Breast epithelium (tissue), 4 donors: ENCODE measurements at regions of chr13 and their contacts with region 1.

Region 1: GRCh38 chr13:31050486-31051400 is 111.0 kb downstream of the HSPH1 start:
- DNase-seq: no peak
- H3K4me3 ChIP-seq: no peak overlapping the region
- H3K27ac ChIP-seq: no peak overlapping the region
- H3K4me1 ChIP-seq: peaks cover 0 to 4% of the 10 kb centered on the region in 2 donors
- H3K27me3 ChIP-seq: no peaks in the 10 kb centered on the region
- CTCF ChIP-seq: peak in 1 of 3 donors; percentile 22
- POLR2A ChIP-seq: no peak

Region 2: GRCh38 chr13:31038834-31039552 is 11.8 kb before region 1 on chr13:
- intact Hi-C with region 1: loop called (anchors 1 kb)
- DNase-seq: no peak
- H3K4me3 ChIP-seq: no peak overlapping the region
- H3K27ac ChIP-seq: no peak overlapping the region
- H3K4me1 ChIP-seq: no peaks in the 10 kb centered on the region
- H3K27me3 ChIP-seq: no peaks in the 10 kb centered on the region
- CTCF ChIP-seq: no peak
- POLR2A ChIP-seq: no peak

Region 3: DNA sequence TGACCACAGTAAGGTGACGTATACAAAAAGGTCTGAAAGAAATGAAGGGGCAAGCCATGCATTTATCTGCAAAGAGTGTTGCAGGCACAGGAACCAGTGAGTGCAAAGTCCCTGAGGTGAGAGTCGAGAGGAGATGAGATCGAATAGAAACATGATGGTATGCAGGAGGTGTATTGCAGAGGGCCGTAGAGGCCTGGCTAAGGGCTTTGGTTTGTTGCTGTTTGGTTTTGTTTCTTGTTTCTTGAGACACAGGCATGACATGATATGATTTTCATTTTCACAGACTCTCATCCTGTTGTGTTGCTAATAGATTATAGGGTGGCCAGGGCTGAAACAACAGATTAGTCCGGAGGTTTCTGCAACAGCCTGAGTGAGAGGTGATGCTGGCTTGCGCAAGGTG is 30.6 kb after region 1 on chr13:
- intact Hi-C with region 1: loop called (anchors 2 kb)
- DNase-seq: no peak
- H3K4me3 ChIP-seq: no peak overlapping the region
- H3K27ac ChIP-seq: no peak overlapping the region
- H3K4me1 ChIP-seq: no peaks in the 10 kb centered on the region
- H3K27me3 ChIP-seq: no peaks in the 10 kb centered on the region
- CTCF ChIP-seq: no peak
- POLR2A ChIP-seq: no peak

Region 4: GRCh38 chr13:31115616-31116015 is 64.9 kb after region 1 on chr13:
- intact Hi-C with region 1: no loop called
- DNase-seq: no peak
- H3K4me3 ChIP-seq: no peak overlapping the region
- H3K27ac ChIP-seq: no peak overlapping the region
- H3K4me1 ChIP-seq: no peaks in the 10 kb centered on the region
- H3K27me3 ChIP-seq: no peaks in the 10 kb centered on the region
- CTCF ChIP-seq: no peak
- POLR2A ChIP-seq: no peak

Region 5: GRCh38 chr13:31896427-31896826 is 845.7 kb after region 1 on chr13:
- intact Hi-C with region 1: no loop called
- DNase-seq: no peak
- H3K4me3 ChIP-seq: no peak overlapping the region
- H3K27ac ChIP-seq: peak overlapping the region in 1 of 2 donors; percentile 15
- H3K4me1 ChIP-seq: no peaks in the 10 kb centered on the region
- H3K27me3 ChIP-seq: no peaks in the 10 kb centered on the region
- CTCF ChIP-seq: no peak
- POLR2A ChIP-seq: no peak

Region 6: DNA sequence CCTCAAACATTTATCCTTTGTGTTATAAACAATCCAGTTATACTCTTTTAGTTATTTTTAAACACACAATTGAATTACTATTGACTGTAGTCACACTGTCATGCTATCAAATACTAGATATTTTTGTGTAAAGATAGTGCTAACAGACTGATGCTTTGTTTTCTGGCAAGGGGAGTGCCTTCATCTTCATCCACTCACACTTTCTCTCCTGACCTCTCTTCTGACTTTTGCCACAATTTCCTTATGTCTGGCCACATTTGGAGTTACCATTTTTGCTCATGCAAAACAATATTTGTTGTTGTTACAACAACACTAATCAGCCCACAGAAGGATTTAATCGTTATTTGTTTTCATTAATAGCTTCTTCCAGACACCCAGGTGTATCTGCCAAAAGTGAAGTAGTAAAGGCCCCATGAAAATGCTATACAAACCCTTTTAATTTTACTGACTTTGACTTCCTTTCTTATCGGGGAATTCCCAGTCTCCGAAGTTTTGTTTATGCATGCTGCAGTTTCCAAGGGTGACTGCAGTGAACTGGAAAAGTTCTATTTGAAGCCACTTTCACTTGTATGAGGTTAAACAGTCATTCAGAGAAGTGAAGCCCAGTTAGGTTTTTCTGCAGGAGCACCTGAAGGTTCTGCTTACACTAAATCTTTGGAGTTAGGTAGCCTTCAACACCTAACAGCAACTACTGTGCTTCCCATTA is 914.8 kb after region 1 on chr13:
- intact Hi-C with region 1: no loop called
- DNase-seq: no peak
- H3K4me3 ChIP-seq: no peak overlapping the region
- H3K27ac ChIP-seq: no peak overlapping the region
- H3K4me1 ChIP-seq: no peaks in the 10 kb centered on the region
- H3K27me3 ChIP-seq: no peaks in the 10 kb centered on the region
- CTCF ChIP-seq: no peak
- POLR2A ChIP-seq: no peak